CD4-positive, alpha-beta T cell (primary cell): ENCODE measurements at regions of chr12 and their contacts with region 1.

Region 1: GRCh38 chr12:106981788-106982187 is 5.2 kb downstream of the MTERF2 start:
- DNase-seq: no peak
- ATAC-seq: no peak
- H3K4me3 ChIP-seq: no peak overlapping the region
- H3K4me3 Mint-ChIP-seq: no peak overlapping the region
- H3K27ac ChIP-seq: no peak overlapping the region
- H3K27ac Mint-ChIP-seq: no peak overlapping the region
- H3K4me1 ChIP-seq: peaks cover 22% of the 10 kb centered on the region
- H3K4me1 Mint-ChIP-seq: peaks cover 37% of the 10 kb centered on the region
- H3K27me3 ChIP-seq: no peaks in the 10 kb centered on the region
- H3K27me3 Mint-ChIP-seq: no peaks in the 10 kb centered on the region
- CTCF ChIP-seq: no peak

Region 2: DNA sequence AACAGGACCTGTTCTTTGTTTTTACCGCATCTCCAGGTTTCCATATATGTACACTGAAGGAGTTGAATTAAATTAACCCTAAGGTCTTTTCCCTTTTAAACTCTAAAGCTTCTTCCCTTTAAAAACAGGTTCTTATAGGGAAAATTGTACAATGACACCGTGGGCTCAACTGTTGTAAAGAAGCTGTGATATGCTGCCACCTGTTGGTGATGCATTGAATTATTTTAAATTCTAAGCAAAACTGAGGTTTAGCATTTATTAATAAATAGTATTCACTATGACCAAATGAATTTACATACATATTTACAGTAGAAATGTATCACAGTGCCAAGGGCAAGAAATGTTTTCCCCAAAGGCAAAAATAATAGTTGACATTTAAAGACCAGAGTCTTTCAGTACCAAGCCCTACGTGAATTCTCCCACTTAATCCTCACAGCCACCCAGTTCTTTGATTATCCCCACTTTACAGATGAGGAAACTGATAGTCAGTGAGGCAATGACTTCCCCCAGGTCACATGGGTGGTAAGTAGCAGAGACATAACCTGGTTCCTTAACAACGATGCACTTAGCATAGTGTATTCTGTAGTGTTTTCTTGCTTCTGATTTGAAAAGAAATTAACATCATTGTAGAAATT is 61.8 kb before region 1 on chr12:
- CTCF ChIA-PET with region 1: no interaction called
- POLR2A ChIA-PET with region 1: no interaction called
- intact Hi-C with region 1: no loop called
- DNase-seq: peak in 5 of 14 experiments; percentile 7 to 72 (median 53)
- ATAC-seq: no peak
- H3K4me3 ChIP-seq: no peak overlapping the region
- H3K4me3 Mint-ChIP-seq: no peak overlapping the region
- H3K27ac ChIP-seq: no peak overlapping the region
- H3K27ac Mint-ChIP-seq: no peak overlapping the region
- H3K4me1 ChIP-seq: peaks cover 6% of the 10 kb centered on the region
- H3K4me1 Mint-ChIP-seq: peaks cover 9% of the 10 kb centered on the region
- H3K27me3 ChIP-seq: no peaks in the 10 kb centered on the region
- H3K27me3 Mint-ChIP-seq: peaks cover 14% of the 10 kb centered on the region
- CTCF ChIP-seq: peak; percentile 81

Region 3: GRCh38 chr12:106964526-106964925 is 17.3 kb before region 1 on chr12:
- CTCF ChIA-PET with region 1: interaction called, 4 read pairs
- POLR2A ChIA-PET with region 1: interaction called, 4 read pairs
- intact Hi-C with region 1: loop called in 1 of 2 experiments (anchors 2 kb)
- DNase-seq: no peak
- ATAC-seq: no peak
- H3K4me3 ChIP-seq: no peak overlapping the region
- H3K4me3 Mint-ChIP-seq: no peak overlapping the region
- H3K27ac ChIP-seq: no peak overlapping the region
- H3K27ac Mint-ChIP-seq: peak overlapping the region; percentile 9
- H3K4me1 ChIP-seq: no peaks in the 10 kb centered on the region
- H3K4me1 Mint-ChIP-seq: peaks cover 44% of the 10 kb centered on the region
- H3K27me3 ChIP-seq: no peaks in the 10 kb centered on the region
- H3K27me3 Mint-ChIP-seq: no peaks in the 10 kb centered on the region
- CTCF ChIP-seq: no peak